AG04450 (cell line): ENCODE measurements at regions of chr1 and their contacts with region 1.

Region 1: DNA sequence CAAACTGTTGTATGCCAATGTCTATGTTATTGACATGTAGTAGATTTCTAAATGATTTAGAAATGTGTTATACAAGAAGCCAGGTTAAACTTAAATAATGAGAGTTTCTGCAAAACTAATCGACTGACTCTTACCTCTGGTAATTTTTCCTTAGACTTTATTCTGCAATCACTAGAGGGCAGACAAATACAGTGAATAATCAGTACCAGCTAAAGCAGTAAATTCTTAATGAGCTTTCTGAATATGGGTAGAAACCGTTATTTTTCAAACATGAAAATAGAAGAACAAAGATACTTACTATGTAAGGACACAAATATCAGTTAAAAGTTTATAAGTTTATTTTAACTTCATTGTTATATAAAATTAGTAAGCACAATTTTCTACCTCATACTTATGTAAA is 97.9 kb upstream of the RGS1 start:
- DNase-seq: no peak
- H3K4me3 ChIP-seq: no peak overlapping the region
- H3K27ac ChIP-seq: no peak overlapping the region
- H3K27me3 ChIP-seq: no peaks in the 10 kb centered on the region
- CTCF ChIP-seq: peak; percentile 63

Region 2: DNA sequence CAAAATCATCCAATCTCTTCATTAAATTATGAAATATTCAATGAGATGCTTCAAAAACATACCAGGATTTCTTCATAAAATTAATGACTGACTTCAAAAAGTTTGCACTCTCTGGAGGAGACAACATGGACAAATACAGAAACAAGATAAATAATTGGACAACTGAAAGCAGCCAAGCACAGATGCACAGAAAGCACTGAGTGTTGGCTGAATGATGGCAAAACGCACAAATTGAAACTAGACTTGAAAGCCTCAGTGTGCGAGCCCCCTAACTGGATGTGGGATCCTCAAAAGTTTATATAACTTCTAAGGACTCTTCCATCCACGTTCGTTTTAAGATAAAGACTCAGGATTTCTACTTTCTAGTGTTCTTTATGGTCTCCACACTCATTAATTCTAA is 291.4 kb before region 1 on chr1:
- CTCF ChIA-PET with region 1: no interaction called
- POLR2A ChIA-PET with region 1: no interaction called
- DNase-seq: no peak
- H3K4me3 ChIP-seq: no peak overlapping the region; the same call in 1 of the 2 replicates
- H3K27ac ChIP-seq: no peak overlapping the region
- H3K27me3 ChIP-seq: no peaks in the 10 kb centered on the region
- CTCF ChIP-seq: no peak

Region 3: DNA sequence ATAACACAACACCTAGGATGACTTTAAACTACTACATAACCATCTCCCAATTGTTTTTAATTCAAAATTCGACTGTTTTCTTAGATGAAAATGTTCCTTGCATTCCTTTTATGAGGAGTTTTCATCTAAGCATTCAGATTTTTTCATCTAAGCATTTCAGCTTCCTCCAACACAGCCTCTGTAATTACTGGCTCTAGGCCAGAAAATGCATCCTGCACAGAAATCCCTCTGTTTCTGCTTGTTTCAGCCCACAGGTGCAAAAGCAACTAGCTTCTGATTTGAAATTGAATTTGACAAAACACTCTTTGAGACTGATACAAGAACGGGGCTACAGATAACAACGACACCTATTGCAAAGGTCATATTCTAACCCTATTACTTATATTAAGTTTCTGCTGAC is 70.4 kb before region 1 on chr1:
- CTCF ChIA-PET with region 1: no interaction called
- POLR2A ChIA-PET with region 1: no interaction called
- DNase-seq: no peak
- H3K4me3 ChIP-seq: no peak overlapping the region
- H3K27ac ChIP-seq: no peak overlapping the region
- H3K27me3 ChIP-seq: no peaks in the 10 kb centered on the region
- CTCF ChIP-seq: no peak

Region 4: DNA sequence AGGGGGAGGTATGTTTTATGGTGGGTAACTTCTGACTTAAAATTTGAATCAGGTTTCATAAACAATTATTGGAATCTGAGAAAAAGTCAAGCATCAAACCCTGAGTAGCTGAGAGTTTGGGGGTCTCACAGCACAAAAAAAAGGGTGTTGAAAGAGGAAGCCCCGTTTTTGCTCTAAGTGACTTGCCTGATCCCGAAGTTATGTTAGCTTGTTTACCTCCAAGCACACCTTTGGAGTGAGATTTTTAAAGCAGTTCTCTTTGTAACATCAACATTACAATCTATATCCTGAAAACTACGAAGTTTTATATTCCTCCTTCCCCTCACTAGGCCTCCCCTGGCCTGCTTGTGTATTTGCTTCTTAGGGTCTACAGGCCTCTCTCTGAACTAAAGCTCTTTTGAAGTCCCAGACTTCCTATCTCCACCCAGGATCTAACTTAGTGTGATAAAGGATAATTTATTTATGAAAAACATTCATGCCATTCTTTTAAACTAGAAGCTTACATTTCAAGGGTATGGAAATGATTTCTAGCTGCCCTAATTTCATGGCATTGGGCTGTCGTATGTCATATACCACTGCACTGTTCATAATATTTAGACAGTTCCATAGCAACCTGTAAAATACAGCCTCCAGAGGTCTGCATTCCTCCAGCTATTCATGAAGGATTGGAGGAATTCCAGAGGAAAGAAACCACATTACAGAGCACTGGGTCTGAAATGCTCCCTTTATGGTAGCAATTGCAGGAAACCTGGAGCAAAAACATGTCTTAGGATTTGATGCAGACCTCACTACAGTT is 61.9 kb after region 1 on chr1:
- CTCF ChIA-PET with region 1: interaction called, 10 read pairs
- POLR2A ChIA-PET with region 1: no interaction called
- DNase-seq: peak; percentile 94
- H3K4me3 ChIP-seq: no peak overlapping the region
- H3K27ac ChIP-seq: peak overlapping the region; percentile 94
- H3K27me3 ChIP-seq: no peaks in the 10 kb centered on the region
- CTCF ChIP-seq: no peak

Region 5: DNA sequence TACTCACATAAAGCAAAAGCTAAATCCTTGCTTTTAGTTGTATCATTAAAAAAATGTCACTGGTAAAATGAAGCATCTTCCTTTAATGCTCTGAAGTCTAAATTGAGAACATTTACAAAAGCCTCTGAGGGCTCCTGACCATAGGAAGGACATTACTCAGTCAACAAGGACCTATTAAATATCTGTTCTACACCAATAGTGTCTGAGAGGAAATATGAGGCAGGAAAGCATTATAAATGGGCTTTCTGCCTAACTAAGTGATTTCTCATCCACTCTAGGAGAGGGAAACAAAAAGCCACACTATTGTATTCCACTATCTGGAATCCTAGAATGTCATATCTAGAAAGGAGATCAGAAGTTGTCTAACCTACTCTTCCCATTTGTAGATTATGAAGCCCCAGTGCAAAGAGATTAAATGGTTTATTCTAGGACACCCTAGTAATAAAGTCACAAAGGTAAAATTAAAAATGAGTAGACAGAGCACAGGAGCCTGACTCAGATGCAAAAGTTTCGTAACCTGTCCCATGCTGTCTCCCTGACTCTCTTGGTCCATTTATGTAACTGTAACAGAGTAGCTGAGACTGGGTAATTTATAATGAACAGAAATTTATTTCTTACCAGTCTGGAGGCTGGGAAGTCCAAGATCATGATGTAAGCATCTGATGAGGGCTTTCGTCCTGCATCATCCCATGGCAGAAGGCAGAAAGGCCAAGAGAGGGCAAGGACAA is 115.5 kb after region 1 on chr1:
- CTCF ChIA-PET with region 1: interaction called, 10 read pairs
- POLR2A ChIA-PET with region 1: no interaction called
- DNase-seq: no peak
- H3K4me3 ChIP-seq: no peak overlapping the region
- H3K27ac ChIP-seq: no peak overlapping the region
- H3K27me3 ChIP-seq: no peaks in the 10 kb centered on the region
- CTCF ChIP-seq: no peak

Region 6: DNA sequence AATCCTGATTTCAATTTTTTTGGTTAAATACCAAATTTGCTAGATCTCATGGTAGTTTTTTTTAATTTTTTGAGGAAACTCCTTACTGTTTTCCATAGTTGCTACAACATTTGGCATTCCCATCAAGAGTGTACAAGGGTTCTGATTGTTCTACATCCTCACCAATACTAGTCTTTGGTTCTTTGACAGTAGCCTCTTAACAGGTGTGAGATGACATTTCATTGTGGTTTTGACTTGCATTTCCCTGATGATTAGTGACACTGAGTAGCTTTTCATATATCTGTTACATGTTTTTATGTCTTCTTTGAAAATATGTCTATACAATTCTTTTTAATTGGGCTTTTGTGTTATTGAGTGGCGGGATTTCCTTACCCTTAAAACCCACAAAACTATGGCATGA is 137.4 kb after region 1 on chr1:
- CTCF ChIA-PET with region 1: interaction called, 42 read pairs
- POLR2A ChIA-PET with region 1: no interaction called
- DNase-seq: no peak
- H3K4me3 ChIP-seq: no peak overlapping the region
- H3K27ac ChIP-seq: no peak overlapping the region
- H3K27me3 ChIP-seq: no peaks in the 10 kb centered on the region
- CTCF ChIP-seq: no peak

Region 7: GRCh38 chr1:193019442-193020026 is 541.9 kb after region 1 on chr1:
- CTCF ChIA-PET with region 1: interaction called, 120 read pairs
- POLR2A ChIA-PET with region 1: no interaction called
- DNase-seq: peak; percentile 27
- H3K4me3 ChIP-seq: no peak overlapping the region
- H3K27ac ChIP-seq: no peak overlapping the region
- H3K27me3 ChIP-seq: no peaks in the 10 kb centered on the region
- CTCF ChIP-seq: peak; percentile 54